Activated CD4-positive, alpha-beta T cell treated with anti-CD3 and anti-CD28 coated beads, Interleukin-2, amount 10 ng/mL, durations not matched to agents 7 days and 5 days (primary cell): ENCODE measurements at regions of chr17 and their contacts with region 1.

Region 1: DNA sequence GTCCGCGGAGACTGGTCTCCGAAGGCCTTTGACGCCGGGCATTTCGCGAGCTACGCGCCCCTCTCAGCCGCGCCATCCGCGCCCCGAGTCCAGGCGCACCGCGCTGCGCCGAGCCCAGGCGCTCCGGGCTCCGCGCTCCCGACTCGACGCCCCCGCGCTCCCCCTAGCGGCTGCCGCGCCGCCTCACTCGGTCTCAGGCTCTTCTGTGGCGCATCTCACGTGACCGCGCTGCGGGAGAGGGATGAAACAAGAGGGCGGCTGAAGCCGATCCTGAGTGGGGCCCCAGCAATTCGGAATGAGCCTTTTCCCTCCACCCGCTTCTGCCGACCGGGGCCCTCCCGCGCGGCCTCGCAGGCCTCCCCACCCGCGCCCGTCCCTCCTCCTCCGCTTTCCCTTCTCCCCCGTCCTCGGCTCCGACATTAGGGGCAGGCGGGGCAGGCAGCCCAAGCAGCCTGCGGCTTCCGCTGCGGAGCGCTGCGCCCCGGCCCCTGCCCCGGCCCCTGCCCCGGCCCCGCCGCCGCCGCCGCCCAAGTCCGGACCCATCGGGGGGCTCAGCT is 42.5 kb upstream of the AMZ2 start:
- DNase-seq: peak; percentile 93
- H3K4me3 Mint-ChIP-seq: peak overlapping the region; percentile 87
- H3K27ac Mint-ChIP-seq: peak overlapping the region; percentile 96
- H3K4me1 Mint-ChIP-seq: peaks cover 32% of the 10 kb centered on the region
- H3K27me3 Mint-ChIP-seq: peaks cover 7% of the 10 kb centered on the region

Region 2: DNA sequence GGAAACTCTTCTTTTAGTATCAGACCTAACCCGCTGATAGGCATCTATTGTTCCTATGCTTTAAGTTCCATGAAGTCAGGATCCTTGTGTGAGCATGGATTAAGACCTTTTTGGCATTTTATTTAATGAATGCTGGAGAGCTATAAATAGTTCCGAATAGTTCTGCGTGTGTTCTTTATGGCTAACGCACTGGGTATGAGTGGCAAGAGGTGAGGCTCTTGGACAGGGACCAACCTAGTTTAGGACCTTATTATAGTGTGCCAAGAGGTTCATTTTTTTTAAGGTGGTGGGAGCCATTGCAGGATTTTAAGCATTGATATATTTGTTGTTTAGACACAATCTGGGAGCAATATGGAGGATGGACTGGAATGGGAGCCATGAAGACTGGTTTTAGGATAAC is 98.0 kb before region 1 on chr17:
- CTCF ChIA-PET with region 1: no interaction called
- POLR2A ChIA-PET with region 1: no interaction called
- DNase-seq: no peak
- H3K4me3 Mint-ChIP-seq: no peak overlapping the region
- H3K27ac Mint-ChIP-seq: no peak overlapping the region
- H3K4me1 Mint-ChIP-seq: peaks cover 26% of the 10 kb centered on the region
- H3K27me3 Mint-ChIP-seq: peaks cover 1% of the 10 kb centered on the region

Region 3: DNA sequence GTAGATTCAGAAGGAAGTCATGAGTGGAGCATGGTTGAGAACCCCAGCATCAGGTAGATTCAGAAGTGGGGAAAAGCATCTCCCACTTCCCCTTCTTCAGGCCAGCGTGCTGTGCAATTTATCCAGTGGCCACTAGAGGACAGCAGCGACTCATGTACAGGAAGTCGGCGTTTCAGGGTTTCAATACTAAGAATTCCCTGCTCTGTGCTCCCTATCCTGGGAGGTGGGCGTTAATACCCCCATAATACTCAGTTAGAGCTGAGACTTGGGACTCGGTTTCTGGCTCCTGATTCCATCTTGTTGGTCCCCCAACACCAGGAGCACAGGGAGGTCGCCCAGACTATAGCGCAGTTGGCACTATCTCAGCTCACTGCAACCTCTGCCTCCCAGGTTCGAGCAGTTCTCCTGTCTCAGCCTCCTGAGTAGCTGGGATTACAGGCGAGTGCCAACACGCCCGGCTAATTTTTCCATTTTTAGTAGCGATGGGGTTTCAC is 32.8 kb before region 1 on chr17:
- CTCF ChIA-PET with region 1: interaction called, 19 read pairs
- POLR2A ChIA-PET with region 1: interaction called, 3 read pairs
- DNase-seq: peak; percentile 80
- H3K4me3 Mint-ChIP-seq: no peak overlapping the region
- H3K27ac Mint-ChIP-seq: no peak overlapping the region
- H3K4me1 Mint-ChIP-seq: peaks cover 31% of the 10 kb centered on the region
- H3K27me3 Mint-ChIP-seq: no peaks in the 10 kb centered on the region

Region 4: DNA sequence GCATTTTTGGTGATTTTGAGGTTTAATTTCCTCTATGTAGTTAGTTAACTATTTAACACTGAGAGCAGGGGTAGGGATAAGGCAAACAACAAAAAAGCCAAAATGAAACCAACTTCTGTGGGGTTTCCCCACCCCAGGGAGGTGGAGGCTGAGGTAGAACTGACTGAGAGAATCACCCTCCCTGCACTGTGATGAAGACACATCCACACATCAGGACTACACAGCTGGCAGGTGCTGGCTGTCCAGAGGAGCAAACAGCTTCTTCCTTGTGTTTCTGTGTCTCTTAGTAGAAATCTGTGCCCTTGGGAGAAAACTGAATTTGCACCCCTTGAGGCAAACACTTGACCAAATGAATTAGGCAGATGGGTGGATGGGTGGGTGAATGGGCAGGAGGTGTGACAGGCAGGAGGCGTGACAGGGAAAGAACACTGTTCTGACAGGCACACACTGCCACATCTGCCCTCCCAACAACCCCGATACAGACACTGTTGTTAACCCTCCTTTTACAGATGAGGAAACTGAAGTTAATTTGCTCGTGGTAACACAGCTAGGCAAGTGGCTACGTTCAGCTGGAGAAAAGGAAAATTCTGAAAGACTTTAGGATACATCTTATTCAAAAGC is 20.4 kb before region 1 on chr17:
- CTCF ChIA-PET with region 1: interaction called, 30 read pairs
- POLR2A ChIA-PET with region 1: interaction called, 3 read pairs
- DNase-seq: peak; percentile 78
- H3K4me3 Mint-ChIP-seq: peak overlapping the region; percentile 35
- H3K27ac Mint-ChIP-seq: peak overlapping the region; percentile 89
- H3K4me1 Mint-ChIP-seq: peaks cover 57% of the 10 kb centered on the region
- H3K27me3 Mint-ChIP-seq: peaks cover 3% of the 10 kb centered on the region

Region 5: GRCh38 chr17:68238164-68238872 is 33.0 kb after region 1 on chr17:
- CTCF ChIA-PET with region 1: interaction called, 11 read pairs
- POLR2A ChIA-PET with region 1: no interaction called
- DNase-seq: peak; percentile 60
- H3K4me3 Mint-ChIP-seq: peak overlapping the region; percentile 70
- H3K27ac Mint-ChIP-seq: peak overlapping the region; percentile 98
- H3K4me1 Mint-ChIP-seq: peaks cover 56% of the 10 kb centered on the region
- H3K27me3 Mint-ChIP-seq: no peaks in the 10 kb centered on the region

Region 6: GRCh38 chr17:68296211-68297191 is 91.2 kb after region 1 on chr17:
- CTCF ChIA-PET with region 1: no interaction called
- POLR2A ChIA-PET with region 1: no interaction called
- DNase-seq: peak; percentile 93
- H3K4me3 Mint-ChIP-seq: peak overlapping the region; percentile 43
- H3K27ac Mint-ChIP-seq: peak overlapping the region; percentile 93
- H3K4me1 Mint-ChIP-seq: peaks cover 61% of the 10 kb centered on the region
- H3K27me3 Mint-ChIP-seq: no peaks in the 10 kb centered on the region